Activated CD4-positive, alpha-beta memory T cell treated with anti-CD3 and anti-CD28 coated beads for 36 hours (primary cell): ENCODE measurements at regions of chr10 and their contacts with region 1.

Region 1: GRCh38 chr10:89163265-89163995 is 43.7 kb downstream of the CH25H start:
- DNase-seq: peak; percentile 76
- H3K4me3 Mint-ChIP-seq: peak overlapping the region; percentile 10
- H3K27ac Mint-ChIP-seq: peak overlapping the region; percentile 35
- H3K4me1 Mint-ChIP-seq: peaks cover 42% of the 10 kb centered on the region
- H3K27me3 Mint-ChIP-seq: peaks cover 15% of the 10 kb centered on the region

Region 2: GRCh38 chr10:88960802-88961201 is 202.6 kb before region 1 on chr10:
- CTCF ChIA-PET with region 1: no interaction called
- POLR2A ChIA-PET with region 1: no interaction called
- intact Hi-C with region 1: loop called (anchors 1 kb)
- DNase-seq: peak; percentile 46
- H3K4me3 Mint-ChIP-seq: no peak overlapping the region
- H3K27ac Mint-ChIP-seq: peak overlapping the region; percentile 73
- H3K4me1 Mint-ChIP-seq: peaks cover 29% of the 10 kb centered on the region
- H3K27me3 Mint-ChIP-seq: no peaks in the 10 kb centered on the region

Region 3: GRCh38 chr10:89129911-89130310 is 33.5 kb before region 1 on chr10:
- CTCF ChIA-PET with region 1: no interaction called
- POLR2A ChIA-PET with region 1: no interaction called
- intact Hi-C with region 1: no loop called
- DNase-seq: no peak
- H3K4me3 Mint-ChIP-seq: no peak overlapping the region
- H3K27ac Mint-ChIP-seq: no peak overlapping the region
- H3K4me1 Mint-ChIP-seq: no peaks in the 10 kb centered on the region
- H3K27me3 Mint-ChIP-seq: peaks cover 9% of the 10 kb centered on the region

Region 4: GRCh38 chr10:89207181-89207800 is 43.9 kb after region 1 on chr10 and contains the start of gene CH25H:
- CTCF ChIA-PET with region 1: interaction called, 4 read pairs
- POLR2A ChIA-PET with region 1: interaction called, 3 read pairs
- intact Hi-C with region 1: loop called (anchors 1 kb)
- DNase-seq: peak; percentile 71
- H3K4me3 Mint-ChIP-seq: peak within 1 kb of the TSS; percentile 64
- H3K27ac Mint-ChIP-seq: no peak within 1 kb of the TSS
- H3K4me1 Mint-ChIP-seq: peaks cover 11% of the 10 kb centered on the region
- H3K27me3 Mint-ChIP-seq: peaks cover 29% of the 10 kb centered on the region
- total RNA-seq, gene CH25H: 0.12 TPM in 1 of 2 experiments, not detected in the other